Activated CD4-positive, alpha-beta memory T cell treated with anti-CD3 and anti-CD28 coated beads for 36 hours (primary cell): ENCODE measurements at regions of chr22 and their contacts with region 1.

Region 1: GRCh38 chr22:41940832-41941765 is 5.9 kb downstream of the CENPM start:
- DNase-seq: peak; percentile 91
- H3K4me3 Mint-ChIP-seq: peak overlapping the region; percentile 80
- H3K27ac Mint-ChIP-seq: peak overlapping the region; percentile 99
- H3K4me1 Mint-ChIP-seq: peaks cover 67% of the 10 kb centered on the region
- H3K27me3 Mint-ChIP-seq: no peaks in the 10 kb centered on the region

Region 2: GRCh38 chr22:41666661-41667258 is 274.3 kb before region 1 on chr22:
- CTCF ChIA-PET with region 1: interaction called, 14 read pairs
- POLR2A ChIA-PET with region 1: no interaction called
- intact Hi-C with region 1: loop called (anchors 1 kb)
- DNase-seq: peak; percentile 97
- H3K4me3 Mint-ChIP-seq: peak overlapping the region; percentile 86
- H3K27ac Mint-ChIP-seq: peak overlapping the region; percentile 97
- H3K4me1 Mint-ChIP-seq: peaks cover 13% of the 10 kb centered on the region
- H3K27me3 Mint-ChIP-seq: no peaks in the 10 kb centered on the region

Region 3: GRCh38 chr22:41746567-41747400 is 194.3 kb before region 1 on chr22:
- CTCF ChIA-PET with region 1: interaction called, 24 read pairs
- POLR2A ChIA-PET with region 1: interaction called, 4 read pairs
- intact Hi-C with region 1: loop called (anchors 2 kb)
- DNase-seq: peak; percentile 72
- H3K4me3 Mint-ChIP-seq: no peak overlapping the region
- H3K27ac Mint-ChIP-seq: no peak overlapping the region
- H3K4me1 Mint-ChIP-seq: peaks cover 6% of the 10 kb centered on the region
- H3K27me3 Mint-ChIP-seq: peaks cover 11% of the 10 kb centered on the region

Region 4: GRCh38 chr22:41822317-41823060 is 118.6 kb before region 1 on chr22:
- CTCF ChIA-PET with region 1: interaction called, 18 read pairs
- POLR2A ChIA-PET with region 1: interaction called, 7 read pairs
- intact Hi-C with region 1: loop called (anchors 1 kb)
- DNase-seq: peak; percentile 46
- H3K4me3 Mint-ChIP-seq: no peak overlapping the region
- H3K27ac Mint-ChIP-seq: peak overlapping the region; percentile 82
- H3K4me1 Mint-ChIP-seq: peaks cover 39% of the 10 kb centered on the region
- H3K27me3 Mint-ChIP-seq: no peaks in the 10 kb centered on the region

Region 5: DNA sequence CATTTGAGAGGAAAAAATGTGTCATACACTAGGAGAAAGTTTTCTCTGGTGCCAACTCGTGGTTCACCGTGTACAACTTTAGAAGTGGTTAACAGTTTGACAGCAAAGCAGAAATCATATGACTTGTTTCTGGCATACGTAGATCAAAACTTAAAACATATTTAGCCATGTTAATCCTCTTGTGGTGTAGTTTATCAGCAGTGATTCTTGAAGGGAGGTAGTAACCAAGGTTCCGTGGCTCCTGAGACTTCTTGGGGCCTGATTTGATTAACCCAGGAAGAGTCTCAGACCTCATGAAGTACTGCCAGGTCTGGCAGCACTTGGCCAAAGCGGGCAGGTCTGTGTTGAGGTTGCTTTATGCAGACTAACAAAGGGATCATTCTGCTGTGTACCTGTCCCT is 67.7 kb before region 1 on chr22:
- CTCF ChIA-PET with region 1: interaction called, 4 read pairs
- POLR2A ChIA-PET with region 1: interaction called, 10 read pairs
- intact Hi-C with region 1: loop called (anchors 1 kb)
- DNase-seq: peak; percentile 58
- H3K4me3 Mint-ChIP-seq: peak overlapping the region; percentile 58
- H3K27ac Mint-ChIP-seq: peak overlapping the region; percentile 92
- H3K4me1 Mint-ChIP-seq: peaks cover 61% of the 10 kb centered on the region
- H3K27me3 Mint-ChIP-seq: no peaks in the 10 kb centered on the region

Region 6: GRCh38 chr22:41951898-41952474 is 10.9 kb after region 1 on chr22 and contains the start of gene SMIM45:
- CTCF ChIA-PET with region 1: interaction called, 11 read pairs
- POLR2A ChIA-PET with region 1: interaction called, 6 read pairs
- intact Hi-C with region 1: no loop called
- DNase-seq: no peak
- H3K4me3 Mint-ChIP-seq: no peak within 1 kb of the TSS
- H3K27ac Mint-ChIP-seq: no peak within 1 kb of the TSS
- H3K4me1 Mint-ChIP-seq: peaks cover 20% of the 10 kb centered on the region
- H3K27me3 Mint-ChIP-seq: no peaks in the 10 kb centered on the region